Esophagus squamous epithelium (tissue), 5 donors: ENCODE measurements at regions of chr2 and their contacts with region 1.

Region 1: DNA sequence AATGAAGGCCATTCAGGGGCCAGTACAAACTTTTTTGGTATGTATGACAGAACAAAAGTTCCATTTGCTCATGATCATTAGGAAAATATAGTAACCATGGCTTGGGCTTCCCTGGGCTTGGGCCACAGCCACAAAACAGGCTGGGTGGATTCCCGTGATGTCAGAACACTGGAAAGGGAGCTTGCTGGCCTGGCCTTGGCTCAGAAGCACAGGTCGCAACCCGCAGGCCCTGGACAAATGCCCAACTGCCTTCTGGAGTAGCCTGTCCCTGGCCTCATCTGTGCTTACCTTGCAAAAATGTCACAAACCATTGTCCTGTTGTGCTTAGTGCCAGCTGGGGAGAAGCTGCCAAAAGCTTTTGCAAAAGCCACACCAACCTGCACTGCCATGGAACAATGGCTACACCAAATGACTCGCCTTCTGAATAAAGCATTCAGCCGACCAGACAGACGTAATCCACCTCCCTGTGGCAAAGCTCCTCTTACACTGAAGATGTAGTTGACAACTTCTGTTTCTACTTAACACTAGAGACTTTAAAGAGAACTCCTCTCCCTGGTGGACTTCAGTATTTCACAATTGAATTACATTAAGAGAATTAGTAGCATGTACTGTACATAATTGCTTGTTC is 125.5 kb downstream of the ANKRD44 start:
- DNase-seq: no peak
- H3K4me3 ChIP-seq: no peak overlapping the region
- H3K27ac ChIP-seq: peak overlapping the region in 2 of 4 donors; percentile 13 to 33
- H3K4me1 ChIP-seq: peaks cover 0 to 50% (median 4%) of the 10 kb centered on the region in 3 donors
- H3K27me3 ChIP-seq: no peaks in the 10 kb centered on the region
- CTCF ChIP-seq: no peak
- POLR2A ChIP-seq: no peak

Region 2: GRCh38 chr2:197310271-197310985 is 125.4 kb after region 1 on chr2 and contains the start of gene ANKRD44:
- intact Hi-C with region 1: loop called (anchors 5 kb)
- DNase-seq: peak; percentile 62
- H3K4me3 ChIP-seq: peak within 1 kb of the TSS; percentile 45 to 84 (median 68)
- H3K27ac ChIP-seq: peak within 1 kb of the TSS; percentile 78 to 94 (median 86)
- H3K4me1 ChIP-seq: peaks cover 0 to 47% (median 13%) of the 10 kb centered on the region in 3 donors
- H3K27me3 ChIP-seq: no peaks in the 10 kb centered on the region
- CTCF ChIP-seq: peak in 5 of 6 experiments; percentile 29 to 69 (median 59)
- POLR2A ChIP-seq: peak in 2 of 4 donors; percentile 77 to 85
- total RNA-seq, gene ANKRD44: 4.5 to 54.0 (median 11.4) TPM